Common myeloid progenitor, CD34-positive (primary cell): ENCODE measurements at regions of chr4 and their contacts with region 1.

Region 1: DNA sequence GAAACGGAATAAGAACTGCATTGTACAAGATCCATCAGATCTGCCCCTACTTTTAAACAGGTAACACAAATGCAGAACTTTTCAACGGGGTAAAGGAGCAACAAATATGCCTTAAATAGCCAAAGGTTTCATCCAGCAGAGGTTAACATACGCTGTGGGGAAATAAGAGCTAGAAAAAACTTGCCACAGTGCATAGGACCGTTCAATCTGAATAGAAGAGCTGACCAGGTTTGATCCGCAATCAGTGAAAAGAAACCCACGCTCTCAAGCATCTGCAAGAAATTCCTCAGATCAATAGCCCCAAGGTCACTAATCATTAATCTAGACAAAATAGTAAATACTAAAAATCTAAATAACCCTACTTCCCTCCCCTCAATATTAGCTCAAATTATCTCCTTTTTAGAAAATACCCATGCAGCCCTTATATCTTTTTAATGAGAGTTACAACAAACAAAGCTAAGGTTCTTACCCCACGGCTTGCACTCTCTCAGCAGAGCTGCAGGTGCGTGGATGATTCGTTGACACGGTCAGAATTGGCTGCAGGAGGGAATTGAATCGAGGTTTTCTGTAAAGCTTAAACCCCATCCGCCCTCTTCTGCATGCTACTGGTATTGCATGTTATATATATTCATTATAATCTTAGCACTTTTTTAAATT is at the start of gene TLR10:
- DNase-seq: peak; percentile 54 to 79 (median 79)
- H3K4me3 ChIP-seq: peak within 1 kb of the TSS in 1 of 7 experiments; percentile 23
- H3K27ac ChIP-seq: no peak within 1 kb of the TSS
- H3K4me1 ChIP-seq: peaks cover 0 to 24% (median 6%) of the 10 kb centered on the region in 4 experiments
- H3K27me3 ChIP-seq: no peaks in the 10 kb centered on the region

Region 2: DNA sequence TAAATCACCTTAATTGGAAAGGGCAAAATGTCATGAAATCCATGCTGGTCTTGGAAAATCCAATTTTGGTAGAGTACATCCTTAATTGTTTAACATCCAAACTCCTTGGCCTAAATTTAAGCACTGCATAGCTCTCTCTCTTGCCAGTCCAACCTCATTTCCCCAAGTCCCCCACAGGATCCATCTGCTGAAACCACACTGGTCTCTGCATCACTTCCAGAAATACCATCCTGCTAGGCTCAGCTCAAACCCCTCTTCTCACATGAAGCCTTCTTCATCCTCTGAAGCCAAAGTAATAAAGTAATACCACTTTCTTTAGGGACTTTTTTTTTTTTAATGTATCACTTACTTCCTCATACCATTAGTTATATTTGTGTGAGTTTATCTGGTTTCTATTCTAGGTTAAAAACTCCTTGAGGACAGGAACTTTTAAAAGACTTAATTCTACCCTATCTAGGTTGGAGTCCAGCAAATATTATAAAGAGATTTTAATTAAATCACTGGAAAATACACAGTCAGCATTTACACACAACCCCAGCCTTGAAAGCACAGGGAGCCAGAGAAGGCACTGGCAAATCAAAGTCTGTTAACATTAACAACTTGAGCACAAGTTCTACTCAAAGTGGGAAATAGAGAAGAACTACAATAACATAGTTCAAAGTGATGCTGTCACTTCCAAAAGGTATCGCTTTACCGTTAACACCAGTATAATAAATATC is 135.3 kb before region 1 on chr4:
- CTCF ChIA-PET with region 1: no interaction called
- POLR2A ChIA-PET with region 1: no interaction called
- DNase-seq: peak; percentile 32 to 89 (median 87)
- H3K4me3 ChIP-seq: no peak overlapping the region
- H3K27ac ChIP-seq: no peak overlapping the region
- H3K4me1 ChIP-seq: peaks cover 0 to 11% (median 5%) of the 10 kb centered on the region in 4 experiments
- H3K27me3 ChIP-seq: no peaks in the 10 kb centered on the region

Region 3: DNA sequence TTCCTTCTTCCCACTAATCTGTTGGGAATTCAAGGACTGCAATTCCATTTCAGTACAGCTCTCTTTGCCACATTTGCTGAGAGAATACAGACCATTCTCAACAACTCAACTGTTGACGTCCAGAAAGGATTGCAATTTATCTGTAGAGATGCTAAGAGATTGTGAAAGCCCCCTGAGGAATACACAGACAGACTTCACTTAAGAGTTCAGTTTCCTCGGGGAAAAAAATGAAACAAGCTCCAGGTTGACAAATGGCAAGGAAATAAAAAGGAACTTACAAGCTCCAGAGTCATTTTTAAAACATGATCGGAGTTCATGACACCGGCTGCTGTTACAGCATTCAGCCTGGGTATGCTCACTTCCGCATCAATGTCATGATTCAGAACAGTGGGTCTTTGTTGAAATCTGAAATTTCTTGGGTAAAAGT is 13.6 kb before region 1 on chr4:
- CTCF ChIA-PET with region 1: interaction called, 220 read pairs
- POLR2A ChIA-PET with region 1: no interaction called
- DNase-seq: peak in 2 of 3 donors; percentile 53 to 62
- H3K4me3 ChIP-seq: no peak overlapping the region
- H3K27ac ChIP-seq: no peak overlapping the region
- H3K4me1 ChIP-seq: peaks cover 2 to 8% (median 4%) of the 10 kb centered on the region in 4 experiments
- H3K27me3 ChIP-seq: no peaks in the 10 kb centered on the region

Region 4: GRCh38 chr4:38795087-38795486 is 12.5 kb after region 1 on chr4:
- CTCF ChIA-PET with region 1: interaction called, 18 read pairs
- POLR2A ChIA-PET with region 1: no interaction called
- DNase-seq: no peak
- H3K4me3 ChIP-seq: no peak overlapping the region
- H3K27ac ChIP-seq: no peak overlapping the region
- H3K4me1 ChIP-seq: peaks cover 0 to 18% (median 13%) of the 10 kb centered on the region in 4 experiments
- H3K27me3 ChIP-seq: no peaks in the 10 kb centered on the region

Region 5: GRCh38 chr4:38804654-38805295 is 22.2 kb after region 1 on chr4 and contains the start of gene TLR1:
- CTCF ChIA-PET with region 1: interaction called, 33 read pairs
- POLR2A ChIA-PET with region 1: no interaction called
- DNase-seq: peak; percentile 73 to 92 (median 92)
- H3K4me3 ChIP-seq: peak within 1 kb of the TSS in 6 of 7 experiments; percentile 58 to 78 (median 73)
- H3K27ac ChIP-seq: peak within 1 kb of the TSS; percentile 73 to 82
- H3K4me1 ChIP-seq: peaks cover 14 to 31% (median 24%) of the 10 kb centered on the region in 4 experiments
- H3K27me3 ChIP-seq: no peaks in the 10 kb centered on the region

Region 6: GRCh38 chr4:38856524-38857337 is 74.2 kb after region 1 on chr4 and contains the start of gene TLR6:
- CTCF ChIA-PET with region 1: interaction called, 15 read pairs
- POLR2A ChIA-PET with region 1: no interaction called
- DNase-seq: peak; percentile 88 to 94 (median 93)
- H3K4me3 ChIP-seq: peak within 1 kb of the TSS in 6 of 7 experiments; percentile 66 to 89 (median 70)
- H3K27ac ChIP-seq: peak within 1 kb of the TSS; percentile 64 to 86
- H3K4me1 ChIP-seq: peaks cover 9 to 34% (median 25%) of the 10 kb centered on the region in 4 experiments
- H3K27me3 ChIP-seq: no peaks in the 10 kb centered on the region